PC-9 (cell line): ENCODE measurements at regions of chr3 and their contacts with region 1.

Region 1: GRCh38 chr3:43769471-43770425 is 79.0 kb downstream of the ABHD5 start:
- DNase-seq: peak; percentile 95 to 99
- H3K4me3 ChIP-seq: peak overlapping the region; percentile 34; the same call in 1 of the 2 replicates
- H3K27ac ChIP-seq: peak overlapping the region; percentile 90
- H3K4me1 ChIP-seq: peaks cover 83% of the 10 kb centered on the region
- H3K27me3 ChIP-seq: no peaks in the 10 kb centered on the region
- CTCF ChIP-seq: peak; percentile 92

Region 2: DNA sequence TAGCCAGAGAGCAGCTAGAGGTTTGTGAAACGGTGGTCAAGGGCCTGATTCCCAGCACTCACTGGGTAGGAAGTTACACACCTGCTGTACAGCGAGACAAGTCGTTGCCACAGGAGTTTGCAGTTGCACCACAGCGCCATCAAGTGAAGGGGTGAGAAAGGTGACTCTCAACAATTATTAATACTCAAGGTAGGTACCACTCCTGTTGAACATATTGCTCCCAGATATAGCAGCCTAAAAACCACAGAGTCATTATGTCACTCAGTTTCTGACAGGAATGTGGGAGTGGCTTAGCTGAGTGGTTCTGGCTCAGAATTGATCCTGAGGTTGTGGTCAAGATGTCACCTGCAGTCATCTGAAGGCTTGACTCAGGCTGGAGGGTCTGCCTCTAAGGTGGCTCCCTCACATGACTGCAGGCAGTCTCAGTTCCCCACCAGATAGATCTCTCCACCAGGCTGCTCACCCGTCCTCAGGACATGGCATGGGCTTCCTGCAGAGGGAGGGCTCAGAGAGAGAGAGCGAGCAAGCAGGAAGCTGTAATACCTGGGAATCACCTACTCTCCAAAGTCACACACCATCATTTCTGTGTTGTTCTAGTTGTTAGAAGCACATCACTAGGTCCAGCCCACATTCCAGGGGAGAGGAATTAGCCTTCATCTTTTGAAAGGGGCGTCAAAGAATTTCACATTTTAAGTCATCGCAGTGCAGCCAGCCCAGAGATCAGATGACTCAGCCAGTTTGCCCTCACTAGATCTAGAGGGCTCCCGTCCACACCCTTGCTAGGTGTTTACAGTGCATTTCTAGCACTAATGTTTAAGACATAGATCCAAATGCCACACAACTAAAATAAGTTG is 130.9 kb before region 1 on chr3:
- CTCF ChIA-PET with region 1: no interaction called
- POLR2A ChIA-PET with region 1: no interaction called
- intact Hi-C with region 1: loop called (anchors 2 kb)
- DNase-seq: peak; percentile 70 to 85
- H3K4me3 ChIP-seq: peak overlapping the region; percentile 18; the same call in 1 of the 2 replicates
- H3K27ac ChIP-seq: peak overlapping the region; percentile 78
- H3K4me1 ChIP-seq: peaks cover 23% of the 10 kb centered on the region
- H3K27me3 ChIP-seq: no peaks in the 10 kb centered on the region
- CTCF ChIP-seq: peak; percentile 59

Region 3: DNA sequence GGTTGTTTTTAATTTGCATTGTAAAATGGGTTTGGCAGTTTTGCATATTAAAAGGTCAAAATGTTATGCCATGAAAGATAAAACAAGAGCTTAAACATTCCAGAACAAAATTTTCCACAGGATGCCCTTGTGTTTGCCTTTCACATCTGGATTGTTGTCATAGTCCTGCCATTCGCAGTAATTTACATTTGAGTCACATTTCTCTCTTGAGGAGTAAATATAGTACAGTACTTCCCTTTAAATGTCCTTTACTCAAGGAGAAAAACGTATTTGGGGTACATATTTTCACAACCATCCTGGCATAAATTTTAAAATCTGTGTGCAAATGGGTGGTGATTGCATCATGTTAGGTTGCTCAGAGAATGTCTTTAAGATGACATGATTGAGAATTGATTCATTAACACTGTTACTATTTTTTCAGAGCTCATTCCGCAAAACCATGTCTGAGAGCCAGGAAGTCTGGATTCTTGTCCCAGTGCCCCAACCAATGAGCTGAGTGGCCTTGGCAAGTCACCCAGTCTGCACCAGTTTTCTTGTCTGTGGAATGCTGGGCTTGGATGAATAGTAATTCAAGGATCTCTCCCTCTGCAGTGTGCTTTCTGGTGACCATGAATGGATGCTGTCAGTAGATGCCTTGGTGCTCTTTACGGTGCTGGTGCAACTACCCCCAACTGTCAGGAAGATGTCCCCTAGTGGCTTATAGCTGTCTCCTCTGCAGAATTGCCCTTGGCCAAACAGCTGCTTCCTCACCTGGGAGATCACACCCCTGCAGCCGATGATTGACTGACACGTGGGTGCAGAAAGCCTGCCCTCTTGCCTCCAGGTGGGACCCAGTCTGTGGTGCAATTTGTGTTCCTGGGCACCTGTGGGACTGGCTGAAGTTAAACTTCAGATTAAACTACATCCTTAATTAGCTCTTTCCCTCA is 36.0 kb before region 1 on chr3:
- CTCF ChIA-PET with region 1: no interaction called
- POLR2A ChIA-PET with region 1: no interaction called
- intact Hi-C with region 1: no loop called
- DNase-seq: no peak
- H3K4me3 ChIP-seq: no peak overlapping the region
- H3K27ac ChIP-seq: no peak overlapping the region
- H3K4me1 ChIP-seq: peaks cover 14% of the 10 kb centered on the region
- H3K27me3 ChIP-seq: no peaks in the 10 kb centered on the region
- CTCF ChIP-seq: no peak

Region 4: DNA sequence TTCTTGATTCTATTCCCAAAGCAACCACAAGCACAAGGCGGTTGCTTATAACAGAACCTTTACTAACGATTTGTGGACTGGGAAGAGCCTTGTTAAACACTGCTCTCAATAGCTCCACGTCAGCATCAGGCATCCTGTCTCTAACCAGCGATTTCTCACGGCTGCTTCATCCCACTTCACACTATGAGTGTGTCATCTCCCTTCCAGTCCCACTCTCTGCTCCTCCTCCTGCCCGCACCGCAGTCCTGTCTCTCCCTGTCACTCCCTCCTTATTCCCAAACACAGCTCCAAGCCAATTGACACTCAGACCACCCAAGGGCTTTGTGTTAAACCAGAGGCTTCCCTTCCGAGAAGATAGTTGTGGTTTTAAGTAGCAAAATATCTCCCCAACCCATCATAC is 15.8 kb after region 1 on chr3:
- CTCF ChIA-PET with region 1: no interaction called
- POLR2A ChIA-PET with region 1: no interaction called
- intact Hi-C with region 1: no loop called
- DNase-seq: no peak
- H3K4me3 ChIP-seq: no peak overlapping the region
- H3K27ac ChIP-seq: no peak overlapping the region
- H3K4me1 ChIP-seq: no peaks in the 10 kb centered on the region
- H3K27me3 ChIP-seq: no peaks in the 10 kb centered on the region
- CTCF ChIP-seq: no peak

Region 5: DNA sequence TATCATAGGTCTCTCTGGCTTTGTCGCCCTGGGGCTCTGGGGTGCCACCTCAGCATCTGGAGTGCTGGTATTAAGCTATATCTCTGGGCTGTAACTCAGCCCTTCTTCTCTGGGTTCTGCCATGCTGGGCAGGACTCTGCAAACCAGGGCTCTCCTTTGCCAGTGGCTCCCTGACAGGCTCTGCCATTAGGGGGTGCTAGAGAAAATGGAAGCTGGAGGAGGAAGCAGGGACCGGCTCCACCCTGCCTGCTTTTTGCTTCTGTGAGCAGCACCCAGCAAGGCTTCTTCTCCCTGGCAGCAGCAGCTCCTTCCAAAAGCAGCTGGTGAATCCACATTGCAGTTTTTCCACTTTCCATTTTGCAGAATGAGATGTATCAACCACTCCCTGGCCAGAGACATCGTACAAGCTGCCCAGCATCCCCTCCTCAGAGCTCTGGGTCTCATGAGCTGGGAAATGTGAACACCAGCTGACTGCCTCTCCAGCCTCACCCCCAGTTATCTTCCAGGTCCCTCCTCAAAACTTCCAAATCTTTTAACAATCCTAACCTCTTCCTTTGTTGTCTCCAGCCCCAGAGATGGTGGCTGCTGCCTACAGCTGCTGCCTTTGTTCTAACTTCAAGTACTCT is 86.0 kb after region 1 on chr3:
- CTCF ChIA-PET with region 1: interaction called, 8 read pairs
- POLR2A ChIA-PET with region 1: no interaction called
- intact Hi-C with region 1: loop called (anchors 5 kb)
- DNase-seq: peak; percentile 64 to 69
- H3K4me3 ChIP-seq: no peak overlapping the region
- H3K27ac ChIP-seq: no peak overlapping the region
- H3K4me1 ChIP-seq: peaks cover 28% of the 10 kb centered on the region
- H3K27me3 ChIP-seq: no peaks in the 10 kb centered on the region
- CTCF ChIP-seq: peak; percentile 69

Region 6: DNA sequence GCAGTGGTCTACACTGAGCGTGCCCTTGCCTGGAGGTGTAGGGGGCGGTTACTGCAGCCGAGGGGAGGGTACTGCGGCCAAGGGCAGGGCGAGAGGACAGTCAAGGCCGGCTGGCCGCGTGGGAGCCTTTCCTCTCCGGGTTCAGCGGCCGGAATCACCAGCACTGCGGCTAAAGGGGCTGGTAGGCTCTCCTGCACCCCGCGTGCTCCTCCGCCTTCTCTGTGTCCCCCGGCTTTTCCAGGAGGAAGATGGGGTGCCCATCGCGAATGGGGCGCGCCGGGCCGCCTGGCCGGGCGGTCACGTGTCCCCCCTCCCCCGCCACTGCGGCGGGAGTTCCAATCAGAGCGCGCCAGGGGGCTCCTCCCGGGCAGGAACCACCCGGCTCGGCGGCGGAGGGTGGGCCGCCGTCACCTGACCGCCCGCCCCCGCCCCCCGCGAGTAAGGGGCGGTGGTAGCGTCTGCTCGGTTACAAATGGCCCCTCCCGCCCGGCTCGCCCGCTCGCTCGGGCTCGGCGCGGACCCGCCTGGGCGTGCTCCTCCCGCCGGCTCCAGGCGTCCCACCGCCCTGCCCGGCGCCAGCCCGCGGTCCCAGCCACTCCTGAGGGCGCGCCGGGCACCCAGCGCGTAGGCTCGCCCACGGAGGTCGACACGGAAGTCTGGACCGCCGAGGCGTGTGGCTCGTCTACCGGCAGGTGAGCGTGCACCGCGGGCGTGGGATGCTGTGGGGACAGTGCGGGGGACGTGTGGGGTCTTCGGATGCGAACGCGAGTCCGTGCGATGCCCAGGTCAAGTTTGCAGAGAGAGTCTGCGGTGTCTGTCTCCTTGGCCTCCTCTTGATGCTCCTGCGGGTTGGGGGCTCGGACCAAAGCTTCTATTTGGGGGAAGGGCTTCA is 229.3 kb after region 1 on chr3:
- CTCF ChIA-PET with region 1: no interaction called
- POLR2A ChIA-PET with region 1: no interaction called
- intact Hi-C with region 1: loop called (anchors 1 kb)
- DNase-seq: peak; percentile 69 to 90
- H3K4me3 ChIP-seq: peak overlapping the region; percentile 70
- H3K27ac ChIP-seq: peak overlapping the region; percentile 88
- H3K4me1 ChIP-seq: peaks cover 22% of the 10 kb centered on the region
- H3K27me3 ChIP-seq: no peaks in the 10 kb centered on the region
- CTCF ChIP-seq: no peak

Region 7: GRCh38 chr3:44227632-44228031 is 457.9 kb after region 1 on chr3:
- CTCF ChIA-PET with region 1: no interaction called
- POLR2A ChIA-PET with region 1: interaction called, 21 read pairs
- intact Hi-C with region 1: no loop called
- DNase-seq: no peak
- H3K4me3 ChIP-seq: no peak overlapping the region
- H3K27ac ChIP-seq: no peak overlapping the region
- H3K4me1 ChIP-seq: no peaks in the 10 kb centered on the region
- H3K27me3 ChIP-seq: no peaks in the 10 kb centered on the region
- CTCF ChIP-seq: no peak